Left colon (tissue), 2 donors: ENCODE measurements at regions of chr9 and their contacts with region 1.

Region 1: GRCh38 chr9:123349691-123350480 is 6.1 kb upstream of the CRB2 start:
- DNase-seq: peak in 1 of 2 donors; percentile 55
- ATAC-seq: peak; percentile 73

Region 2: DNA sequence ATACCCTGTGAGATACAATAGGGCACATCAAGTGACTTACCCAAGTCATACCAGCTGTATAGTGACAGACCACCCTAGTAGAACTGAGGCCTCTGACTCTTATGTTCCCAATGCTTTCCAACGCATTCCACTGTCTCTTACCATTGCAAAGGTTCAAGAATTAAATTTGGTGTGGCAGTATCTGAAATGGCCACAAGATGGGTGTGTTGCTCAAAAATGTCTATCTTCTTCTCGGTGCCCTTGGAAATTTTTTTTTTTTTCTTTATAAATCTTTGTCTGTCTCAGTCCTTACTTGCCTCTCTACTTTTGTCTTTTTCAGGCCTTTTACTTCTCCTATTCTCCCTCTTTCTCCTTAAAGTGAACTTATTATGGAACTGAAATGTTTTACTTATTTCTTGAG is 268.1 kb before region 1 on chr9:
- intact Hi-C with region 1: loop called in 1 of 2 experiments (anchors 10 kb)
- DNase-seq: no peak
- ATAC-seq: peak; percentile 48

Region 3: GRCh38 chr9:123389070-123389469 is 39.2 kb after region 1 on chr9:
- intact Hi-C with region 1: loop called in 1 of 2 experiments (anchors 5 kb)
- DNase-seq: no peak
- ATAC-seq: no peak